Prostate gland (tissue), 2 donors: ENCODE measurements at regions of chr3 and their contacts with region 1.

Region 1: DNA sequence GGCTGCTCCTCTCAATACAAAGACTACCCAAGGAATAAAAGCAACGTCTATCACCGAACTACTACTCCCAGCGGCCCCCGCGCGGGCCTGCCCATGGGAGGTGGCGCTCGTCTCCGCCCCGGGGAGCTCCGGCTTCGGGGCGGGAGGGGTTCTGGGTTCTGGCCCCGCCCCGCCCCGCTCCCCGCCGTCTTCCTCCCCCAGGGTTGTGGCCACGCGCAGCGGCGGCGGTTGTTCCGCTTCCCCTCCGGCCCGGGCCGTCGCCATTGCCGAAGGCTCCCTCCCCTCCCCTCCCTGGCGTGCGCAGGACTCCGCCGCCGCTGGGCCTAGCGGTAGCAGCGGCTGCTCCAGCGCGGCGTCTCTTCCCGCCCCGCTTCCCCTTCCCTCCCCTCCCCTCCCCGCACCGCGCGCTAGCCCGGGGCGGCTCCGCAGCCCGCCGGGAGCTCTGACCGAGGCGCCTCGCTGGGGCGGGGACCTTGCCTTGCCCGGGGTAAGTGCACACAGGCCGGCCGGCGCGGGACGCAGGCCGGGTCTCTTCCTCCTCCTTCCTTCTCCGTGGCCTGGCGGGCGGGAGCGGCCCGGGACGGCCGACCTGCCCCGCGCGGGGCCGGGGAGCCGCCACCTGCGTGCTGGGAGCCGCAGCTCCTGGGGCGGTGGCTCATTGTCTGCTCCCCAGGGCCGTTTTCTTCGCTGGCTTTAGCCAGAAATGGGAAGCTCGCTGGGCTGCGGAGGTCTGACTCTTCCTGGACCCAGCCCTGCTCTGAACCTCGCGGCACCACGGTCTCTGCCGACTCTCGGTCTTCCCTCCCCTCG is at the start of gene PAK2:
- DNase-seq: peak; percentile 94
- H3K4me3 ChIP-seq: peak within 1 kb of the TSS; percentile 76 to 96
- H3K27ac ChIP-seq: peak within 1 kb of the TSS; percentile 92 to 95
- H3K4me1 ChIP-seq: peaks cover 3% of the 10 kb centered on the region
- H3K27me3 ChIP-seq: no peaks in the 10 kb centered on the region
- CTCF ChIP-seq: peak in 1 of 4 experiments; percentile 21
- POLR2A ChIP-seq: peak; percentile 75
- total RNA-seq, gene PAK2: 37.4 to 48.3 TPM

Region 2: DNA sequence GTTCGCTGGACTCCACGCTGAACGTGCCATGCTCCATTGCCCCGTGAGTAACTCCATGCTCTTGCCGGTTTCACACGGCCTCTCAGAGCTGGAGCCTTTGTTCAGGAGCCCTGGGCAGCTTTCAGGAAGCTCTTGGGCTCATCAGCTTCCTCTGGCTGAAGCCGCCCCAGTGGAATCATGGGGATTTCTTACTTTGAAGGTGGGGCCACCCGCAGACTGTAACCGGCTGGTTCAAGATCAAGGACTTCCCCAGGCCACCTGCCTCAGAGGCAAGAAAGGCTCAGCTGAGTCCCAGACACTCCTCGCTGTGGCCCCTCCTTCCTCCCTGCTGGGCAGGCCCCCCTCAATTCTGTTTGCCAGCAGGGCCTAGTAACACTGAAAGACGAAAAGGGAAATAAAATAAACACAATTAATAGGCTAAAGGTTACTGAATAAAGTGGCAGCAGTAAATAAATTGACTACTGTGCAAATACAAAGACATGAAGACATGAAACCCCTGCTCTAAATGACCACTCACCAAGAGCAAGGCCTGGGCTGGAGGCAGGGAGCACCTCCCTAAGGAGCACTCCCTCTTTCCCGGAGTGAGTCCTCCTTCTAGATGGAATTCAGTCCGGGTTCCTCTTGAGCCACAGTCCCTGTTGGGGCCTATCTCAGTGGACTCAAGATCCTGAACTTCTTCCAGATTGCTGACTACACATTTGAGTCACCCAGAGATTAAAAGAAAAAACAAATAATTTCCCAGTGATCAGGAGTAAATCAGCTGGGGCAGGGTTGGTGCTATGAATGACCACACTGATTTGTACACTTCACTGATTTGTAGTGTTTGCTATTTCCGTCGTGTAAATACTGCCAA is 579.7 kb before region 1 on chr3:
- intact Hi-C with region 1: no loop called
- DNase-seq: no peak
- H3K4me3 ChIP-seq: no peak overlapping the region
- H3K27ac ChIP-seq: no peak overlapping the region
- H3K4me1 ChIP-seq: no peaks in the 10 kb centered on the region
- H3K27me3 ChIP-seq: no peaks in the 10 kb centered on the region
- CTCF ChIP-seq: no peak
- POLR2A ChIP-seq: no peak

Region 3: GRCh38 chr3:196711838-196712513 is 27.9 kb before region 1 on chr3 and contains the starts of genes CEP19 and PIGX:
- intact Hi-C with region 1: loop called (anchors 2 kb)
- DNase-seq: peak; percentile 80
- H3K4me3 ChIP-seq: peak within 1 kb of the TSS; percentile 77 to 90
- H3K27ac ChIP-seq: peak within 1 kb of the TSS; percentile 93
- H3K4me1 ChIP-seq: no peaks in the 10 kb centered on the region
- H3K27me3 ChIP-seq: no peaks in the 10 kb centered on the region
- CTCF ChIP-seq: peak in 3 of 4 experiments; percentile 3 to 61 (median 54)
- POLR2A ChIP-seq: peak; percentile 91
- total RNA-seq, gene CEP19: 2.2 to 6.3 TPM
- total RNA-seq, gene PIGX: 32.6 to 60.4 TPM

Region 4: DNA sequence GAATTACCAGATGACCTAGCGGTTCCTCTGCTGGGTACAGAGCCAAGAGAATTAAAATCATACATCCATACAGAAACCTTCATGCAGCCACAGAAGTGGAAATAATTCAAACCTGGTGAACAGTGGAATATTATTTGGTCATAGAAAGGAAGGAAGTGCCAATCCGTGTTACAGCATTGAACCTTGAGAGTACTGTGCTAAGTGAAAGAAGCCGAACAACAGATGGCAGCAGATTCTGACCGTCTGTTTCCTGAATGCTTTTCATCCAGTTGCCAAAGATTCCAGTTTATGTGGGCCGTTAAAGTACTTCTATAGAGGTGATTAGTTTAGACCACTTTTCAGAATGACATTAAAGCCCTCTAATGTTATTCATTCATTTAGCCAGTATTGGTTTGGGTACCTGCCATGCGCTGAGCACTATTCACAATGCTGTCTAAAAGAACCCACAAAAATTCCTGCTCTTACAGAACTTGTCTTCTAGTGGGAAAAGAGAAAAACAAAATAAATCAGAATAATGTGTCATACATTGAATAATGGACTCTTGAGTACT is 82.0 kb after region 1 on chr3:
- intact Hi-C with region 1: no loop called
- DNase-seq: no peak
- H3K4me3 ChIP-seq: no peak overlapping the region
- H3K27ac ChIP-seq: no peak overlapping the region
- H3K4me1 ChIP-seq: no peaks in the 10 kb centered on the region
- H3K27me3 ChIP-seq: no peaks in the 10 kb centered on the region
- CTCF ChIP-seq: no peak
- POLR2A ChIP-seq: no peak

Region 5: GRCh38 chr3:197487908-197488391 is 748.1 kb after region 1 on chr3:
- intact Hi-C with region 1: no loop called
- DNase-seq: peak; percentile 57
- H3K4me3 ChIP-seq: no peak overlapping the region
- H3K27ac ChIP-seq: no peak overlapping the region
- H3K4me1 ChIP-seq: peaks cover 4% of the 10 kb centered on the region
- H3K27me3 ChIP-seq: no peaks in the 10 kb centered on the region
- CTCF ChIP-seq: no peak
- POLR2A ChIP-seq: no peak